ENCODE measurements at regions of chr1 and their contacts with region 1.

Region 1: DNA sequence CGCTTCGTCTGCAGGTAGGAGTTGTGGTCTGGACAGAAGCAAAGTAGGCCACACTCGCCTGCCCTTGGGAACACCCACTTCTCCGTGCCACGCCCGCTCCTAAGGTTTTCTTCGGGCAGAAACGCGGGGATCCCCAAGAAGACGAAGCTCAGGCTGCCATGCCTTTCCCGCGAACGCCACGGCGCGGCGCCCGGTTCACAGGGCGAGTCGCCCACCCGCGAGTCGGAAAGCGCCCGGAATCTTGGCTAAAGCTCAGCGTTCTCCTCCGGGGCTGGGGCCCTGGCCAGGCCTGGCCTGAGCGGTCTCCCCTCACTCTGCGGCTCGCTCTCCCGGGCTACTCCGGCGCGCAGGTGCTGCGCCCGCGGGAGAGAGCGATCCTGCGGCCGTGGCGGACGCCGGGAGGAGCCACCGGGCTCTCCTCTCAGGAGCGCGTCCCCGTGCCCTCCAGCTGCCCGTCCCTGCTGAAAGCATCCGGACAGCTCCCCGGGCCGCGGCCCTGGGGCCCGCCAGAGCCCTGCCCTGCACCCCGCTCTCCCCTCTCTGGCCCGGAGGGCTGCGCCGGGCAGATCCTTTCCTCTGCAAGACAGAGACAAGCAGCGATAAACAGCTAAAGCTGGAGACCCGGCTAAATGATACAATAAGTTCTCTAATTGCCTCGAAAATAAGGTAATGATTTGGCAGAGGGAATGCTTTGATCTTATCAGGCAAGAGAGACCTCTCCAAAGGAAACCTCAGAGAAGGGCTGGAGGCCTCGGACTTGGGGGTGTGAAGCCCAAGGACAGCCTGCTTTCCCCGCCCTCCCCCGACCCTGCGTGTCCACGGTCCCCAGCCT is 6.7 kb upstream of the WNT2B start:
- DNase-seq: peak; percentile 69
- H3K4me3 Mint-ChIP-seq: peak overlapping the region; percentile 65
- H3K27ac Mint-ChIP-seq: no peak overlapping the region
- H3K4me1 Mint-ChIP-seq: no peaks in the 10 kb centered on the region
- H3K27me3 Mint-ChIP-seq: peaks cover 23% of the 10 kb centered on the region
- CTCF ChIP-seq: peak; percentile 56

Region 2: DNA sequence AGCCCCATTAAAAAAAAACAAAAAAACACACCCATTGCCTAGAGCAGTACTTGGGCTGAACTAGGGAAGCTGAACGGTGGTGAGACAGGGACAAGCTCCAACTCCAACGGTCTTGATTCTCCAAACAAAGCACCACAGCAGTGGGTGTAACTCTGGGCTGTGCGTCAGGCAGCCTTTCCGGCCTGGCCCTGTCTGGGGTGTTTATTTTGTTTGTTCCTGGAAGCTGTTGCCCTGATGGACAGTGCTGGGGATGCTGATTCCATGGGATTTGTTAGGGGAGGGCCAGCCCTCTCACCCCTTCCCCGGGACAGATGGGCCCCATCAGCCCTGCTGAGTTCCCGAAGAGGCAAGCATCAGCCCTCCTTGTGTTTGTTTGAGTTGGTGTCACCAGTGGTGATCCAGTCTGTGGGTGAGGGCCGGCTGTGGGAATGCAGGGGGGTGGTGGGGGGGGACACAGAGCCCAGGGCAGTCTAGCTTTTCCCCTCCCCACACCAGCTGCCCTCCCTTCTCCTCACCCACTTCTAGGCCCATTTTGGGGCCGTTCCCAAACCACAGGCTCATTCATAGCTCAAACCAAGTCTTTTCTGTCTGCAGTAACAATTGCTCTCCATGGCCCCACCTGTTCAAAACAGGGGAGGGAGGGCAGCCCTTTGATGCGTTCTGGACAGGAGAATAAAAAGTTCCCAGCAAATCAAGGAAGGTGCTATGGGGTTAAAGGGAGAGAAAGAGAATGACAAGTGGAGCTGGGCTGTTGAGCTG is 11.3 kb after region 1 on chr1:
- CTCF ChIA-PET with region 1: interaction called, 10 read pairs
- POLR2A ChIA-PET with region 1: no interaction called
- intact Hi-C with region 1: no loop called
- DNase-seq: no peak
- H3K4me3 Mint-ChIP-seq: no peak overlapping the region
- H3K27ac Mint-ChIP-seq: no peak overlapping the region
- H3K4me1 Mint-ChIP-seq: no peaks in the 10 kb centered on the region
- H3K27me3 Mint-ChIP-seq: no peaks in the 10 kb centered on the region
- CTCF ChIP-seq: no peak

Region 3: DNA sequence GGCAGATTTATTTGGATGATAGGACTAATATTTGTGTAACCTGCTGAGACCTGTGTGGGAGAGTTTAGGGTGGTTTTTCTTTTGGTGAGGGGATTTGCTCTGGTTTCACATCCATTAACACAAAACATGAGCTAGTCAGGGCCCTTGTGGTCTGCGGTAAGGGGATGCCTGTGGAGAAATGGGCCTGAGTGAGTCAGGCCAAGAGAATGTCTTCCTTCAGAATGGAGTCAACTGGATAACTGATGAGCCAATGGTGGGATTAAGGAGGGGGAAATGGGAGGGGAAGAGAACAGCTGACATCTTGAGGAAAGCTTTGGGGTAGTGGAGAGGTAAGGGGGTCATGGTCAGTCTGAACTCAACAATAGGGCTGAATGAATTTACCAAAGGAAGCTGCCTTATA is 20.6 kb after region 1 on chr1:
- CTCF ChIA-PET with region 1: interaction called, 10 read pairs
- POLR2A ChIA-PET with region 1: no interaction called
- intact Hi-C with region 1: no loop called
- DNase-seq: peak; percentile 70
- H3K4me3 Mint-ChIP-seq: no peak overlapping the region
- H3K27ac Mint-ChIP-seq: no peak overlapping the region
- H3K4me1 Mint-ChIP-seq: no peaks in the 10 kb centered on the region
- H3K27me3 Mint-ChIP-seq: no peaks in the 10 kb centered on the region
- CTCF ChIP-seq: no peak

Region 4: DNA sequence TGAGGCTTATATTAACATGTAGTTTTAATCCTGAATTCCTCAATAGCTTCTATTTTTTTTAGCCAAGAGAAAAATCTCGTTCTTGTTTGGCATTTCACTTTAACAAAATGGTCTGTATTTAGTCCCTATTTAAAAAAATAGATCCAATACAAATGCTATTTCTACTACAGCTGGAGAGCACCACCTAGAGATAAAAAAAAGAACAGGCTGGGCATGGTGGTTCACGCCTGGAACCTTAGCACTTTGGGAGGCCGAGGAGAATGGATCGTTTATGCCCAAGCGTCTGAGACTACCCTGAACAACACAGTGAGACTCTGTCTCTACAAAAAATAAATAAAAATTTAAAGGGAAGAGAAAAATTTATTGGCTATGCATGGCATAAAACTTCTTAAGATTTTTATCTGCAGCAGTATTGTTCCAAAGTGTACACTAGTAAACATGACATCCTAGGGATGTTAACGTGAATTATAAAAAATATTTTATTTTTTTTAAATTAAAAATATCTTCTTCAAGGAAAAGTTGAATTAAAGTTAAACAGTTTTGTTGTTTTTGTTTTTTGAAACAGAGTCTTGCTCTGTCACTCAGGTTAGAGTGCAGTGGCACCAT is 112.5 kb after region 1 on chr1:
- CTCF ChIA-PET with region 1: interaction called, 6 read pairs
- POLR2A ChIA-PET with region 1: no interaction called
- intact Hi-C with region 1: loop called (anchors 1 kb)
- DNase-seq: peak; percentile 49
- H3K4me3 Mint-ChIP-seq: no peak overlapping the region
- H3K27ac Mint-ChIP-seq: no peak overlapping the region
- H3K4me1 Mint-ChIP-seq: peaks cover 6% of the 10 kb centered on the region
- H3K27me3 Mint-ChIP-seq: no peaks in the 10 kb centered on the region
- CTCF ChIP-seq: peak; percentile 55

Region 5: GRCh38 chr1:112935461-112936289 is 433.6 kb after region 1 on chr1:
- CTCF ChIA-PET with region 1: no interaction called
- POLR2A ChIA-PET with region 1: no interaction called
- intact Hi-C with region 1: no loop called
- DNase-seq: peak; percentile 70
- H3K4me3 Mint-ChIP-seq: peak overlapping the region; percentile 26
- H3K27ac Mint-ChIP-seq: peak overlapping the region; percentile 68
- H3K4me1 Mint-ChIP-seq: peaks cover 28% of the 10 kb centered on the region
- H3K27me3 Mint-ChIP-seq: no peaks in the 10 kb centered on the region
- CTCF ChIP-seq: no peak

Measured in MCF 10A (cell line).